Left ventricle myocardium inferior (tissue), 1 donor: ENCODE measurements at regions of chr15 and their contacts with region 1.

Region 1: GRCh38 chr15:90780916-90781315 is 63.8 kb downstream of the BLM start:
- DNase-seq: no peak
- H3K4me3 ChIP-seq: no peak overlapping the region
- H3K27ac ChIP-seq: no peak overlapping the region
- H3K4me1 ChIP-seq: peaks cover 12% of the 10 kb centered on the region
- H3K27me3 ChIP-seq: no peaks in the 10 kb centered on the region
- CTCF ChIP-seq: no peak

Region 2: DNA sequence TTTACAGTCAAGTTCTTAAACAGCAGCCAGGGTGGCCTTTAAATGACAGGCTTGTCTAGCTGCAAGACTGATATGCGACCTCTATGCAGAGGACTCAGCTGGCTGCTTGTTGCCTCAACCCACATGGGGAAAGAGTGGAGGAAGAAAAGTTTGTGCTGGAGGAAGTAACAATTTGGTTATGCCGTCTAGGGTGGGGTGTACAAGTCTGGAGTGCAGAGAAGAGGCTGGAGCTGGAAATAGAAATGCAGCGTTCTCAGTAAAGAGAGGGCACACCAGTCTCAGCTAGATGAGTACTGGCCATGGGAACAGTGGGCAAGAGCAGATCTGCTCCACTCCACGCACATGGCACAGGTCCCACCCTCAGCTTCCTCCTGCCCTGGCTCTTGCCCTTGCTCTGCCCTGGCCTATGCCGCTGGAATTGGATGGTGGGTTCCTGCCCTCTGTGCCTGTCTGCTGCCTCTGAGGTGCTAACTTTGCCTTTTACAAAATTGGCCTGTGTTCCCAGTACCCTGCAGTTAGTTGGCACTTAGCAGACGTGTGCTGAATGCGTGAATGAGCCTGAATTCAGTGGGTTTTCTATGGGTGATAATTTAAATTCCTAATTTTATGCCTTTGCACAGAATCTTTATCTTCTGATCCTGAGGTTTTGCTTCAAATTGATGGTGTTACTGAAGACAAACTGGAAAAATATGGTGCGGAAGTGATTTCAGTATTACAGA is 27.8 kb after region 1 on chr15:
- intact Hi-C with region 1: loop called (anchors 2 kb)
- DNase-seq: no peak
- H3K4me3 ChIP-seq: no peak overlapping the region
- H3K27ac ChIP-seq: no peak overlapping the region
- H3K4me1 ChIP-seq: no peaks in the 10 kb centered on the region
- H3K27me3 ChIP-seq: no peaks in the 10 kb centered on the region
- CTCF ChIP-seq: no peak